Heart left ventricle (tissue), 16 donors: ENCODE measurements at regions of chr2 and their contacts with region 1.

Region 1: DNA sequence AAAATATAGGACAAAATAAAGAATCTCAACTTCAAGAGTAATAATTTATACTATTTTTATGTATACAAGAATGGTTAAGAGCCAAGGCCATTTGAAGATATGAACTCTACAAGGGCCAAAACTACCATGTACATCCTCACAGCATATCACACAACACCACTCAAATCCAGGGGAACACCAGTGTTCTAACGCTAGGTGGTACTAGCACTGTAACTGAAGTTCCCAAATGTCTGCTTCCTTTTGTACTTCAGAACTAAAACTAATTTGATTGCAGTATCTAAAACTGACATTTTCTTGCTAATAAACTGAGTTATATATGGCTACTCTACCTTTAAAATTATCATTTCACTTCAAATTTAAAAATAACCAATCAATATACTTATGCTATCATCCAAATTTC is 47.0 kb downstream of the REV1 start:
- DNase-seq: no peak
- ATAC-seq: peak in 2 of 4 donors; percentile 77 to 83
- H3K4me3 ChIP-seq: no peak overlapping the region
- H3K27ac ChIP-seq: no peak overlapping the region
- H3K4me1 ChIP-seq: peaks cover 0 to 13% (median 4%) of the 10 kb centered on the region in 12 donors
- H3K27me3 ChIP-seq: no peaks in the 10 kb centered on the region
- CTCF ChIP-seq: peak; percentile 17 to 65 (median 46)
- POLR2A ChIP-seq: no peak

Region 2: DNA sequence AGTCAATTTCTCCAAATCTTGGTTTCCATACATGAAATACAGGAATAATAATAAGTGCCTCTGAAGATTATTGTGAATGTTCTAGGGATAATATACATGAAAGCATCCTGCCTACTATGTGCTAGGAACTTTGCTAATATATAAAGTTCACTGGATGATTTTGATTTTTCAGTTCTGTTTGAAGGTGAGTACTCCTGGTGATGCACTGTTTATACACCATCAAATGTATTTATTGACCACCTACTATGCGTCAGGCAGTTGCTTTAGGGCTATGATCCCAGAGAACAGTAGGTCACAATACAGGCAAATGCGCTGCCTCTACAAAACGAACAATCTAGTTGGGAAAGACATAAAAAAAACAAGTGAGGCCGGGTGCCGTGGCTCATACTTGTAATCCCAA is 117.5 kb before region 1 on chr2:
- intact Hi-C with region 1: no loop called
- DNase-seq: no peak
- ATAC-seq: no peak
- H3K4me3 ChIP-seq: no peak overlapping the region
- H3K27ac ChIP-seq: no peak overlapping the region
- H3K4me1 ChIP-seq: no peaks in the 10 kb centered on the region
- H3K27me3 ChIP-seq: no peaks in the 10 kb centered on the region
- CTCF ChIP-seq: no peak
- POLR2A ChIP-seq: no peak

Region 3: GRCh38 chr2:99458529-99458928 is 15.7 kb after region 1 on chr2:
- intact Hi-C with region 1: loop called in 1 of 10 experiments (anchors 2 kb)
- DNase-seq: no peak
- ATAC-seq: no peak
- H3K4me3 ChIP-seq: no peak overlapping the region
- H3K27ac ChIP-seq: no peak overlapping the region
- H3K4me1 ChIP-seq: peaks cover 0 to 7% (median 0%) of the 10 kb centered on the region in 12 donors
- H3K27me3 ChIP-seq: no peaks in the 10 kb centered on the region
- CTCF ChIP-seq: no peak
- POLR2A ChIP-seq: no peak

Region 4: DNA sequence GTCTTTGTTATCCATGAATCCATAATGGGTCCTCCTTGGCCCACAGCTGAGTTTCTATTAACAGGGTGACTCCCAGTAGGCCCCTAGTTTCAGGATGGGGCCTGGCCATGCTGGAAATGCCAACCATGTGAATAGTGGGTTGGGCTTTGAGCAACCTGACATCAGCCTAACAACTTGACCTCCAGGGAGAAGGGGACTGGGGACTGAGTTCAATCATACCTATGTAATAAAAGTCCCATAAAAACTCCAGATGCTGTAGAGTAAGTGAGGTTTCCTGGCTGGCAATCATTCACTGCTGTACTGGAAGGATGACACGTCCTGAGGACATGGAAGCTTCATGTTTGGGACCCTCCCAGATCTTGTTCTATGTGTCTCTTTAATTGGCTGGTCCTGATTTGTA is 39.1 kb after region 1 on chr2:
- intact Hi-C with region 1: loop called in 2 of 10 experiments (anchors 2 to 5 kb)
- DNase-seq: peak in 3 of 5 donors; percentile 25 to 36 (median 36)
- ATAC-seq: peak in 3 of 4 donors; percentile 61 to 75 (median 65)
- H3K4me3 ChIP-seq: no peak overlapping the region
- H3K27ac ChIP-seq: peak overlapping the region in 2 of 12 donors; percentile 13 to 42
- H3K4me1 ChIP-seq: peaks cover 6 to 82% (median 56%) of the 10 kb centered on the region in 12 donors
- H3K27me3 ChIP-seq: no peaks in the 10 kb centered on the region
- CTCF ChIP-seq: no peak
- POLR2A ChIP-seq: no peak